Endothelial cell of umbilical vein (primary cell): ENCODE measurements at regions of chr19 and their contacts with region 1.

Region 1: DNA sequence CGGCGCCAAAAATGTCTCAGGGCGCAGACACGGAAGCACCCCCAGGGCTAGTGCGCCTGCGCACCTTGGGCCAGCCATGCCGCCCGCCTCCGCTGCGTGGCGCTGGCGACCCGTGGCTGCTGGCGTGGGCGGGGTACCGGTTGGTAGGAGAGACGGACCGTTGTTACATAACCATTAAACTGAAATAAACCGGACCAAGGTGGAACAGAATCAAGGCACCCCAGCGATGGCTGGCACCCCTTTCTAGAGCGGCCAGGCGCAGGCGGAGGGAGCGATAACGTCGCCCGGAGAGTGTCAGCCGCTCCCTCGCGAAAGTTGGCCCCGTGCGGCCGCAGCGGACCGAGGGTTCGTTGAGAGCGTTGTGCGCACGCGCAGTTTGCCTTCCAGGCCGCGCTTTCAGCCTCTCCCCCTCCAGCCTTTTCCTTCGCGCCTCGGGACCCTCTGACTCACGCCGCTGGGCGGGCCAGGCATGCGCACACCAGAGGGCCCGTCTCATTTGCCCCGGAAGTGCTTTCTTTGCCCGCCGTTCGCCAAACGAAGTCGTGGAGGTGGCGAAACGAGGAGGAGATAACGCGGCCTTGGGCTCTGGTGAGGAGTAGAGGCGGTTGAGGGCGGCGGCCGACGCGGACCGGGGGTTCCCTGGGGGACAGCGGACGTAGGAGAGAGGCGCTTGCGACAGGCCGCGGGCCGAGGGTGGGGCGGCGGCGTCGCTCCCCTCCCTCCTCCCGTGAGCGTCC is at the starts of genes PLEKHJ1 and SF3A2:
- DNase-seq: peak; percentile 99
- H3K4me3 ChIP-seq: peak within 1 kb of the TSS; percentile 56 to 86 (median 80)
- H3K27ac ChIP-seq: peak within 1 kb of the TSS; percentile 66
- H3K4me1 ChIP-seq: peaks cover 41% of the 10 kb centered on the region
- H3K27me3 ChIP-seq: no peaks in the 10 kb centered on the region
- CTCF ChIP-seq: peak; percentile 99
- POLR2A ChIP-seq: peak; percentile 71
- total RNA-seq, gene PLEKHJ1: 73.4 and 82.4 TPM in 2 replicates
- total RNA-seq, gene SF3A2: 140 and 164 TPM in 2 replicates

Region 2: GRCh38 chr19:2168619-2169424 is 67.7 kb before region 1 on chr19:
- CTCF ChIA-PET with region 1: interaction called, 3 read pairs
- POLR2A ChIA-PET with region 1: no interaction called
- dilution Hi-C with region 1: no loop called
- intact Hi-C with region 1: loop called (anchors 2 kb)
- DNase-seq: peak; percentile 99
- H3K4me3 ChIP-seq: no peak overlapping the region
- H3K27ac ChIP-seq: peak overlapping the region; percentile 85
- H3K4me1 ChIP-seq: peaks cover 39% of the 10 kb centered on the region
- H3K27me3 ChIP-seq: no peaks in the 10 kb centered on the region
- CTCF ChIP-seq: no peak
- POLR2A ChIP-seq: no peak

Region 3: GRCh38 chr19:2261438-2262172 is 25.1 kb after region 1 on chr19:
- CTCF ChIA-PET with region 1: interaction called, 40 read pairs
- POLR2A ChIA-PET with region 1: no interaction called
- dilution Hi-C with region 1: no loop called
- intact Hi-C with region 1: no loop called
- DNase-seq: peak; percentile 49
- H3K4me3 ChIP-seq: no peak overlapping the region
- H3K27ac ChIP-seq: no peak overlapping the region
- H3K4me1 ChIP-seq: peaks cover 4% of the 10 kb centered on the region
- H3K27me3 ChIP-seq: no peaks in the 10 kb centered on the region
- CTCF ChIP-seq: peak; percentile 70
- POLR2A ChIP-seq: no peak

Region 4: DNA sequence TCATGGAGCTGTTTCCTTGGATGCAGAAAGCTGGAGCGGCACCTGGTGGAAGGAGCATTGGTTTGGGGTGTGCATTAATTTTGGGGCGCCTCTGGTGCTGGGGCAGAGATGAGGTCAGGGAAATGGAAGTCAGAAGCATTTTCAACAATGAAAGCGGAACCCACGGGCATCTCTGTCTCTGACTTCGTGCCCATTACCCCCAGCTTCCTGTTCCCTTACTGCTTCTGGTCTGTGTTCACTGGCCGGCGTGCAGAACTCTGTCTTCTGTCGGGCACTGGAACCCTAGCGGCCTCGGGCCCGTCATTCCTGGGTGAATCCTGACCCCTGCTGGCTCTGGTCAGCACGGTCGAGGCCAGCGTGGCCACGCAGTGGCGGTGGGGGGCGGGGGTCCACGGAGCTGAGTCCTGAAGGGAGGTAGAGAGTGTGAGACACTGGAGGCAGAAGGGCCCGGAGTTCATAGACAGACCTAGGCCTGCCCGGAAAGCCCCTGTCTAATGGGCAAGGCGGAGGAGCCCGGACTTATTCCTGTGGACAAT is 79.4 kb after region 1 on chr19:
- CTCF ChIA-PET with region 1: interaction called, 14 read pairs
- POLR2A ChIA-PET with region 1: no interaction called
- dilution Hi-C with region 1: no loop called
- intact Hi-C with region 1: loop called (anchors 1 kb)
- DNase-seq: peak; percentile 48
- H3K4me3 ChIP-seq: no peak overlapping the region
- H3K27ac ChIP-seq: no peak overlapping the region
- H3K4me1 ChIP-seq: no peaks in the 10 kb centered on the region
- H3K27me3 ChIP-seq: peaks cover 1 to 10% of the 10 kb centered on the region in 2 experiments
- CTCF ChIP-seq: peak; percentile 54 to 64
- POLR2A ChIP-seq: no peak

Region 5: DNA sequence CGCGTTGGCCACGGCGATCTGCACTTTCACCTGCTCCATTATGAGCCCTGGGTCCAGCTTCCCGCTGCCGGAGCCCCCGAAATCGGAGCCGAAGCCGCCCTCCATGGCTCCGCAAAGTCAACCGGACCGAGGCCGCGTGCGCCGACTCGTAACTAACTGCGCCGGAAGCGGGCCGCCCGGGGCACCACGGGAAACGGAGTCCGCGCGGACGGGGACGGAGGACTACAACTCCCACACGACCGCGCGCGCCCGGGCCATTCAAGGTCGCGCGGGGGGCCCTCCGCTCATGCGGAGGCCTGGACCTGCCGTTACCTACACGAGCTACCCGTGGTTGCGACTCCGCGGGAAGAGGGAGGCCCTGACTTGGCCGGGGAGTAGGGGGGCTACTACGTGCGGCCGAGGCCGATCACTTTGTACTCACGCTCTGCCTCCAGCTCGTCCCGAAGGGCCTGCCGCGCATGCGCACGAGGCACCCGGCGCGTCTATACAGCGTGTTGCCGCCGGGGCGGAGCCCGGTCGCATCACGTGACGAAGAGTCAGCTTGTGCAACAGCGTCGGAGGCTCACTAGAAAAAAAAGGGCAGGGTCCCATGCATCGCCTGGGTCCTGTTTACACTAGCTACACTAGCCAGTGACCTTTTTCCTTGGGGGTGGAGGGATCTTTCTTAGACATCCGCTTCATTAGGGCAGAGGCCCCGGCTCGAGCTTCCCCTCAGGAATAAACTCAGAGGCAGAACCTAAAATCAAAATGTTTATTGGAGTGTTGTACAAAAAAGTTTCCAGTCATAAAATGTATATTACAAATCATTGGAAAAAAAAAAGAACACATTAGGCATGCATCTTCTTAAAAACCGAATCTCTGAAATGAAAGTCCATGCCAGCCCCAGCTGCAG is 191.2 kb after region 1 on chr19 and contains the start of gene TIMM13:
- CTCF ChIA-PET with region 1: no interaction called
- POLR2A ChIA-PET with region 1: no interaction called
- dilution Hi-C with region 1: no loop called
- intact Hi-C with region 1: loop called (anchors 2 kb)
- DNase-seq: peak; percentile 98
- H3K4me3 ChIP-seq: peak within 1 kb of the TSS; percentile 63 to 75 (median 63)
- H3K27ac ChIP-seq: peak within 1 kb of the TSS; percentile 84
- H3K4me1 ChIP-seq: peaks cover 26% of the 10 kb centered on the region
- H3K27me3 ChIP-seq: no peaks in the 10 kb centered on the region
- CTCF ChIP-seq: no peak
- POLR2A ChIP-seq: peak; percentile 49
- total RNA-seq, gene TIMM13: 148 and 160 TPM in 2 replicates

Region 6: GRCh38 chr19:2618611-2619010 is 382.1 kb after region 1 on chr19:
- CTCF ChIA-PET with region 1: interaction called, 5 read pairs
- POLR2A ChIA-PET with region 1: no interaction called
- dilution Hi-C with region 1: no loop called
- intact Hi-C with region 1: loop called (anchors 1 kb)
- DNase-seq: peak; percentile 29
- H3K4me3 ChIP-seq: no peak overlapping the region
- H3K27ac ChIP-seq: peak overlapping the region; percentile 81
- H3K4me1 ChIP-seq: peaks cover 27% of the 10 kb centered on the region
- H3K27me3 ChIP-seq: no peaks in the 10 kb centered on the region
- CTCF ChIP-seq: no peak
- POLR2A ChIP-seq: no peak